ENCODE measurements at regions of chr9 and their contacts with region 1.

Region 1: DNA sequence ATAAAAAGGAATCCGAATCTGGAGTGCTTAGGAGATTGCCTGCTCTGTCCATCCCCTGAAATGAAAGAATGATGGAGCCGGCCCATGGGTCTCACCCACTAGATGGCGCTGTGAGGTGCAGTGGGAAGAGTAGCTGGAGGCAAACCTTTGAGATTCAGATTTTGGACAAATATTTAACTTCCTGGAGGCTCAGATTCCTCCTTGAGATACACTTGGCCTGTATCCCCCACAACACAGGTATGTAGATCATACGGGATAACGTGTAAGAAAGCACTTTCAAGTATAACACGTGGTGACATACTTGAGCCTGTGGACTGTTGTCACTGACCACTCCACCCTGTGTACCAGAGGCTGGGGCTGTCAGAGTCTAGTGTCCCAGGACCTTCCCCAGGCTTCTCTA is 32.3 kb downstream of the TRMO start:
- DNase-seq: peak; percentile 86
- H3K4me3 Mint-ChIP-seq: no peak overlapping the region
- H3K27ac Mint-ChIP-seq: no peak overlapping the region
- H3K4me1 Mint-ChIP-seq: peaks cover 16% of the 10 kb centered on the region
- H3K27me3 Mint-ChIP-seq: no peaks in the 10 kb centered on the region

Region 2: GRCh38 chr9:97820373-97820772 is 69.7 kb before region 1 on chr9:
- CTCF ChIA-PET with region 1: no interaction called
- intact Hi-C with region 1: no loop called
- DNase-seq: no peak
- H3K4me3 Mint-ChIP-seq: no peak overlapping the region
- H3K27ac Mint-ChIP-seq: no peak overlapping the region
- H3K4me1 Mint-ChIP-seq: no peaks in the 10 kb centered on the region
- H3K27me3 Mint-ChIP-seq: peaks cover 22% of the 10 kb centered on the region

Region 3: DNA sequence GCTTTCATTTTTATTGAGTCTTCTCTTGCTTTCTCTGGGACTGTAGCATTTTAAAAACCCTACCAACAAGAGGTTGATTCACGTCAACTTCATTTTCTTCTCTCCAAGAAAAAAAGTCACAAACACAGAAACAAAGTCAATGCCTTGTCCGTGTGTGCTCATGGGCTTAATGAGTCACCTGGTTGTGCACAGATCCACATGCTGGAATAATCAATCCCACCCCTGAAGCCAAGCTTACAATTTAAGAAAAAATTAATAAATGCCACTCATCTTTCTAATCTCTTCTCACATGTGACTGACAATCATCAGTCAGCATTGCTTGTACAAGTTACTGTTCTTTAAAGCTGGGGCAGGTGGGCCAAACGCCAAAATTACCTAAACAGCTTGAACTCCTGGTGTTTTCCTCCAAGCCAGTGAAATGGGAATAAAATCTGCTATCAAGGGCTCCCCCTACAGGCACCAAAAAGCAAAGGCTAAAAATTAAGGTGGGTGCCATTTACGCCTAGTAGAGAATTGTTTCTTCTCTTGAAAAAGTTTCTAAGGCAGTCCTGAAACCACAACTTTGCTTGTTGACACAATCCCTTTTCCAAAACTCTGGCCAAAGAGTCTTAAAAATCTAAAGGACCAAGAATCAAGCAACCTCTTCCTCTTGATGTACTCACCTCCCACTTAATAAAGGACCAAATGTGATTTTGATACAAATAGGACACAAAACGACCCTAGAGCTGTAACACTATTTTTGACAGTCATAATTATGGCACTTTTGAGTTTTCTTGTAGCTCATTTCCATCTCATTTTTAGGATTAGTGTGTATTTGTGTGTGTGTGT is 10.9 kb after region 1 on chr9:
- CTCF ChIA-PET with region 1: interaction called, 170 read pairs
- intact Hi-C with region 1: loop called (anchors 1 kb)
- DNase-seq: peak; percentile 52
- H3K4me3 Mint-ChIP-seq: no peak overlapping the region
- H3K27ac Mint-ChIP-seq: no peak overlapping the region
- H3K4me1 Mint-ChIP-seq: peaks cover 59% of the 10 kb centered on the region
- H3K27me3 Mint-ChIP-seq: no peaks in the 10 kb centered on the region

Region 4: GRCh38 chr9:97954550-97954989 is 64.5 kb after region 1 on chr9:
- CTCF ChIA-PET with region 1: interaction called, 5 read pairs
- intact Hi-C with region 1: loop called (anchors 1 kb)
- DNase-seq: peak; percentile 75
- H3K4me3 Mint-ChIP-seq: no peak overlapping the region
- H3K27ac Mint-ChIP-seq: no peak overlapping the region
- H3K4me1 Mint-ChIP-seq: no peaks in the 10 kb centered on the region
- H3K27me3 Mint-ChIP-seq: no peaks in the 10 kb centered on the region

Measured in activated naive CD4-positive, alpha-beta T cell treated with anti-CD3 and anti-CD28 coated beads for 36 hours (primary cell).